Left ventricle myocardium superior (tissue), 1 donor: ENCODE measurements at regions of chr11 and their contacts with region 1.

Region 1: GRCh38 chr11:10792398-10792975 is 16.2 kb downstream of the EIF4G2 start:
- DNase-seq: peak; percentile 94
- ATAC-seq: peak; percentile 91

Region 2: GRCh38 chr11:10580623-10581022 is 211.9 kb before region 1 on chr11:
- intact Hi-C with region 1: no loop called
- DNase-seq: no peak
- ATAC-seq: no peak

Region 3: GRCh38 chr11:10920205-10920604 is 127.7 kb after region 1 on chr11:
- intact Hi-C with region 1: loop called (anchors 10 kb)
- DNase-seq: no peak
- ATAC-seq: no peak

Region 4: DNA sequence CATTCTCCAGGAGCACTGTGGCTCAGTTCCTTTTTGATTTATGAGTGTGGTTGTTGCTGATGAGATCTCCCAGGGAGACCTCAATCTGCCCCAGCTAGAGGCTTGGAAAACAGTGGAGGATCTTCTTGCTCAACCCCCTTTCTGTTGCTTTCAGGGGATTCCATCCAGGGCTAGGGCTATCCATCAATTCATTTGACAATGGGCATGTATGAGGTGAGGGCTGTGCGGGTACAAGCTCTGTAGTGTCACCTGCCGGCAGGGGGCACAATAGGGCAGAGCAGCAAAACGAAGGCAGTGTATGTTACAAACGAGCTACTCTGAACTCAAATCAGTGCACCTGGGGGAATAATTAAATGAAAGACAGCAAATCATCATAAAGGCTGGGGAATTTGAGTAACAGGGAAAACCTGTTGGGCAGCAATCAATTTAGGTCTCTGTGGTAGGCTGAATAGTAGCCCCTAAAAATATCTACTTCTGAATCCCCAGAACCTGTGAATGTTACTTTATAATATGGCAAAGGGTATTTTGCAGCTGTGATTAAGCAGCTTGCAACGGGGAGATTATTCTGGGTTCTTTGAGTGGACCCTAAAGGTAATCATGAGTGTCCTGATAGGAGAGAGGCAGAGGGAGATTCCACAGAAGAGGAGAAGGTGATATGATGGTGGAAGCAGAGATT is 235.7 kb after region 1 on chr11:
- intact Hi-C with region 1: loop called (anchors 10 kb)
- DNase-seq: peak; percentile 79
- ATAC-seq: peak; percentile 83